ENCODE measurements at regions of chr7 and their contacts with region 1.

Region 1: GRCh38 chr7:25069900-25070443 is 55.1 kb downstream of the CYCS start:
- DNase-seq: peak; percentile 15 to 47
- ATAC-seq: peak; percentile 22 to 78 (median 68)
- H3K4me3 ChIP-seq: peak overlapping the region in 8 of 10 donors; percentile 6 to 40 (median 30)
- H3K27ac ChIP-seq: no peak overlapping the region
- H3K4me1 ChIP-seq: peaks cover 0 to 10% (median 3%) of the 10 kb centered on the region in 9 donors
- H3K27me3 ChIP-seq: no peaks in the 10 kb centered on the region
- CTCF ChIP-seq: peak; percentile 73 to 95 (median 90)

Region 2: DNA sequence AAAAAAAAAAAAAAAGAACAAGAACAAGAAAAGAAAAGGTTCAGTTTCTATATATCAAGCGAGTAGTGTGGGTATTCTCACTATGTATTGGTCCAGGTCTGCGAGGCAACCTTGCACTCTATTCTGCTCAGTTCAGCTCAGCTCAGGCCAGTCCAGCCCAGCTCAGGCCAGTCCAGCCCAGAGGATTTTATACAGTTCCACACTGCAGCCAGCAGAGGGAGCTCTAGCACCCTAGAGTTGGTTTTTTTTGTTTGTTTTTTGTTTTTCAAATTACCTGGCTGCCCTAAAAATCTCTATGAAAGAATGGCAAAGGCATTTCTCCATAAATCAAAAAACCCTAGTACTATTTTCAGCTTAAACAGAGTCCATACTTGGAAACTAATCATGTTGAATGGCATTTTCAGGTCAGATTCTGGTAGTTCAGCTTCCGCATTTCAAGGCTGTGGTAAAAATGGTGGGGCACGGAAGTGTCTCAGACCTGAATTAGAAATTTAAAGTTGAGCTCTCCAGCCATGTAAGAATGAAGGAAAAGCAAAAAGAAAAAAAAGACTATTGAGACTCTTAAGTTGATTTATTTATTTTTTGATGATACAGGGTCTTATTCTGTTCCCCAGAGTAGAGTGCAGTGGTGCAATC is 257.5 kb before region 1 on chr7:
- intact Hi-C with region 1: loop called in 5 of 10 experiments (anchors 2 to 5 kb)
- DNase-seq: peak; percentile 33 to 34
- ATAC-seq: peak in 7 of 8 donors; percentile 74 to 85 (median 83)
- H3K4me3 ChIP-seq: no peak overlapping the region
- H3K27ac ChIP-seq: no peak overlapping the region
- H3K4me1 ChIP-seq: no peaks in the 10 kb centered on the region
- H3K27me3 ChIP-seq: no peaks in the 10 kb centered on the region
- CTCF ChIP-seq: peak; percentile 82 to 93 (median 92)

Region 3: GRCh38 chr7:24819916-24820689 is 249.9 kb before region 1 on chr7:
- intact Hi-C with region 1: loop called in 9 of 10 experiments (anchors 1 to 5 kb)
- DNase-seq: peak; percentile 66 to 89
- ATAC-seq: peak; percentile 84 to 96 (median 92)
- H3K4me3 ChIP-seq: no peak overlapping the region
- H3K27ac ChIP-seq: peak overlapping the region in 1 of 10 donors; percentile 75
- H3K4me1 ChIP-seq: peaks cover 0 to 28% (median 11%) of the 10 kb centered on the region in 9 donors
- H3K27me3 ChIP-seq: no peaks in the 10 kb centered on the region
- CTCF ChIP-seq: peak; percentile 60 to 94 (median 90)

Region 4: GRCh38 chr7:24882989-24883621 is 186.9 kb before region 1 on chr7:
- intact Hi-C with region 1: loop called in 2 of 10 experiments (anchors 5 to 10 kb)
- DNase-seq: peak; percentile 38 to 61
- ATAC-seq: peak in 7 of 8 donors; percentile 40 to 92 (median 76)
- H3K4me3 ChIP-seq: no peak overlapping the region
- H3K27ac ChIP-seq: peak overlapping the region in 1 of 10 donors; percentile 7
- H3K4me1 ChIP-seq: peaks cover 0 to 36% (median 6%) of the 10 kb centered on the region in 9 donors
- H3K27me3 ChIP-seq: no peaks in the 10 kb centered on the region
- CTCF ChIP-seq: no peak

Region 5: DNA sequence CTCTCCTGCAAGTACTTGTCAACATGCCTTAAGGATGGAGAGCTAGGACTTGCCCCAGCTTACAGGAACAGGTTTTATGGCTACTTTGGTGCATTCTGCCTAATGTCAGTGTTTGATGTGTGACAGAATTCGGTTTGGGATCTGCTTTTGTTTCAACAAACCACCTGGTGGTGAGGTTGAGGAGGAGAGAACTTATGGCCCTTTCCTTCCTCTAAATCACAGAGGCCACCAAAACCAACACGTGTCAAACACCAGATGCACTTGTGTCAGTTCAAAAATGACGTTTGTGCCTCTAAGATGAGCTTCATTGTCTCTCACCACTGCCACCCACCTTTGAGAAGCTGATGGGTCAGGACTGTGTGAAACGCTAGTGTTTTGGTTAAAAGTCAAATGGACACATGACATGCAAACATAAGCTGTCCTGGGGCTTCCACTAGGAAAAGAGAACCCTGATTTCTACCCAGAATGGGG is 173.9 kb before region 1 on chr7:
- intact Hi-C with region 1: loop called in 1 of 10 experiments (anchors 10 kb)
- DNase-seq: no peak
- ATAC-seq: no peak
- H3K4me3 ChIP-seq: no peak overlapping the region
- H3K27ac ChIP-seq: no peak overlapping the region
- H3K4me1 ChIP-seq: peaks cover 0 to 25% (median 0%) of the 10 kb centered on the region in 9 donors
- H3K27me3 ChIP-seq: no peaks in the 10 kb centered on the region
- CTCF ChIP-seq: no peak

Region 6: GRCh38 chr7:24979863-24980533 is 90.0 kb before region 1 on chr7 and contains the start of gene OSBPL3:
- intact Hi-C with region 1: loop called in 7 of 10 experiments (anchors 5 kb)
- DNase-seq: peak; percentile 94 to 95
- ATAC-seq: peak; percentile 97 to 99 (median 98)
- H3K4me3 ChIP-seq: peak within 1 kb of the TSS; percentile 58 to 90 (median 76)
- H3K27ac ChIP-seq: peak within 1 kb of the TSS; percentile 59 to 92 (median 84)
- H3K4me1 ChIP-seq: peaks cover 0 to 69% (median 12%) of the 10 kb centered on the region in 9 donors
- H3K27me3 ChIP-seq: peaks cover 0 to 14% (median 0%) of the 10 kb centered on the region in 7 donors
- CTCF ChIP-seq: no peak
- total RNA-seq, gene OSBPL3: 1.8 to 10.6 (median 4.6) TPM

Region 7: GRCh38 chr7:25093268-25093826 is 23.4 kb after region 1 on chr7:
- intact Hi-C with region 1: loop called in 1 of 10 experiments (anchors 2 kb)
- DNase-seq: peak; percentile 47 to 71
- ATAC-seq: peak; percentile 74 to 90 (median 84)
- H3K4me3 ChIP-seq: no peak overlapping the region
- H3K27ac ChIP-seq: no peak overlapping the region
- H3K4me1 ChIP-seq: peaks cover 0 to 6% (median 0%) of the 10 kb centered on the region in 9 donors
- H3K27me3 ChIP-seq: peaks cover 0 to 3% (median 0%) of the 10 kb centered on the region in 7 donors
- CTCF ChIP-seq: peak; percentile 60 to 88 (median 69)

Measured in heart right ventricle (tissue), 16 donors.